ENCODE measurements at regions of chr12 and their contacts with region 1.

Region 1: DNA sequence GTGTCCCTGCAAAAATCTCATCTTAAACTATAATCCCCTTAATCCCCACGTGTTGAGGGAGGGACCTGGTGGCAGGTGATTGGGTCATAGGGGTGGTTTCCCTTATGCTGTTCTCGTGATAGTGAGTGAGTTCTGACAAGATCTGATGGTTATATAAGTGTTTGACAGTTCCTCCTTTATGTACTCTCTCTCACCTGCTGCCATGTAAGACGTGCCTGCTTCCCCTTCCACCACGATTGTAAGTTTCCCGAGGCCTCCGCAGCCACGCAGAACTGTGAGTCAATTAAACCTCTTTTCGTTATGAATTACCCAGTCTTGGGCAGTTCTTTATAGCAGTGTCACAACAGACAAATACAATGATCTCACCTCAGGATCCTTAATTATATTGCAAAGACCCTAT is 45.2 kb upstream of the MAP1LC3B2 start:
- DNase-seq: no peak
- ATAC-seq: no peak
- H3K4me3 ChIP-seq: no peak overlapping the region
- H3K27ac ChIP-seq: no peak overlapping the region
- H3K4me1 ChIP-seq: no peaks in the 10 kb centered on the region
- H3K27me3 ChIP-seq: peaks cover 1 to 29% of the 10 kb centered on the region in 2 experiments; a peak in 2 of 5 replicates
- CTCF ChIP-seq: no peak
- EP300 ChIP-seq: no peak
- POLR2A ChIP-seq: no peak
- RAD21 ChIP-seq: no peak

Region 2: GRCh38 chr12:116684891-116685290 is 170.9 kb after region 1 on chr12:
- CTCF ChIA-PET with region 1: no interaction called
- POLR2A ChIA-PET with region 1: no interaction called
- in situ Hi-C with region 1: no loop called
- intact Hi-C with region 1: loop called (anchors 5 kb)
- DNase-seq: no peak
- ATAC-seq: no peak
- H3K4me3 ChIP-seq: no peak overlapping the region
- H3K27ac ChIP-seq: no peak overlapping the region
- H3K4me1 ChIP-seq: no peaks in the 10 kb centered on the region
- H3K27me3 ChIP-seq: no peaks in the 10 kb centered on the region
- CTCF ChIP-seq: no peak
- EP300 ChIP-seq: no peak
- POLR2A ChIP-seq: no peak
- RAD21 ChIP-seq: no peak

Measured in HepG2 (cell line).